ENCODE measurements at regions of chr10 and their contacts with region 1.

Region 1: DNA sequence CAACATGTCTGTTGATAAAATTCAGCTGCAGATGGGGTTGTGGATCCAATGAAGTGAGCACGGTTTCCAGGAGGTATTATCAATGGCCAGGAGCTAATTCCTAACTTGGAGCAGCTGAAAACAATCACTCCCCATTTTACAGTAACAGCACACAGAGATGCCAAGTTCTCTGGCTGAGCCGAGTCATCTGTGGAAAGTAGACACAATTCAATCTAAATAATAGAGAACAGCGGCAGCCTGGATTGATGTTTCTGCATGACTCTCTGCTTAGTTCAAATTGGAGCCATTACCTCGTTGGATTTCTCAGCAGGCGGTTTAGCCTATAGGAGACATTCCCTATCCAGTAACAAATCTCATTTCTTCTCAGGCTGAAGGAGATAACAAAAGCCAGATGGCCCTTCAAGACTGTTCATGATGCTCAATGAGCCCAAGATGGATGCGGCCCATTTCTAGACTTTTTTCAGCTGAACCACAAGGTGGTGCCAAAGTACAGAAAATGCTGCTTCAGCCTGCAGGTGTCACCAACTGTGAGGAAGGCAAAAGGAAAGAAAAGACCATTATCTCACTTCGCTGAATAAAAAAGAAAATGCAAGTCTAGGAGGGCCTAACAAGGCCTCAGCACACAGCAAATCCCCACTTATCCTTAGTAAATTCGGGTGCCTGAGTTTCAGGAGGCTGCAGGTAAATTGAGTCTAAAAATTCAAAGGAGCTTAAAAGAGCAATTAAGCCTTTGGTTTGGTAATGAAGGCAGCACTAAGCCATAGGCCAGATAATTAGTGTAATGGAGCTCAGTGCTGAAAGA is 83.7 kb downstream of the SLC16A9 start:
- DNase-seq: peak; percentile 30
- ATAC-seq: peak; percentile 94
- H3K4me3 Mint-ChIP-seq: no peak overlapping the region
- H3K27ac Mint-ChIP-seq: no peak overlapping the region
- H3K4me1 Mint-ChIP-seq: peaks cover 2% of the 10 kb centered on the region
- H3K27me3 Mint-ChIP-seq: no peaks in the 10 kb centered on the region
- CTCF ChIP-seq: peak; percentile 77

Region 2: GRCh38 chr10:58781873-58782488 is 843.9 kb before region 1 on chr10:
- CTCF ChIA-PET with region 1: interaction called, 15 read pairs
- POLR2A ChIA-PET with region 1: no interaction called
- intact Hi-C with region 1: no loop called
- DNase-seq: no peak
- ATAC-seq: no peak
- H3K4me3 Mint-ChIP-seq: no peak overlapping the region
- H3K27ac Mint-ChIP-seq: no peak overlapping the region
- H3K4me1 Mint-ChIP-seq: no peaks in the 10 kb centered on the region
- H3K27me3 Mint-ChIP-seq: peaks cover 4% of the 10 kb centered on the region
- CTCF ChIP-seq: peak; percentile 74

Region 3: GRCh38 chr10:59240582-59241183 is 385.2 kb before region 1 on chr10:
- CTCF ChIA-PET with region 1: interaction called, 3 read pairs
- POLR2A ChIA-PET with region 1: no interaction called
- intact Hi-C with region 1: loop called (anchors 5 kb)
- DNase-seq: no peak
- ATAC-seq: no peak
- H3K4me3 Mint-ChIP-seq: no peak overlapping the region
- H3K27ac Mint-ChIP-seq: no peak overlapping the region
- H3K4me1 Mint-ChIP-seq: no peaks in the 10 kb centered on the region
- H3K27me3 Mint-ChIP-seq: peaks cover 2% of the 10 kb centered on the region
- CTCF ChIP-seq: peak; percentile 67

Region 4: DNA sequence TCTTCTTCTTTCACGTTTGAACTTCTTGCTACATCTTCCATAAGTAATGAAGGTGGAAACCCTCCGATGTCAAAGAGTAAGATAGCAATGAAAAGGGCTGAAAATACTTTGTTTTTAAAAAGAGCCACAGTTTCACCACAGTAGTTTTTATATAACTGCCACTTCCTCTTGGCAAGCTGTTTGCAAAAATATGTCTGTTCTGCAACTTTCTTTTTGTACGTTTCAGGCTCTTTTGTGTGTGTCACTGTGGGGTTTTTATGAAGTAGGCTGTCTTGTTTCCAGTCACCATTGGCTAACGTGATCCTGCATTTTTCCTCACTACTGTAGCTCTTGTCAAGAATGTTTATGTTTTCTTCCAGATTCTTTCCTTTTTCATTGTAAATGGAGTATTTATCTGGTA is 28.1 kb after region 1 on chr10:
- CTCF ChIA-PET with region 1: no interaction called
- POLR2A ChIA-PET with region 1: no interaction called
- intact Hi-C with region 1: no loop called
- DNase-seq: no peak
- ATAC-seq: no peak
- H3K4me3 Mint-ChIP-seq: no peak overlapping the region
- H3K27ac Mint-ChIP-seq: peak overlapping the region; percentile 34
- H3K4me1 Mint-ChIP-seq: peaks cover 10% of the 10 kb centered on the region
- H3K27me3 Mint-ChIP-seq: no peaks in the 10 kb centered on the region
- CTCF ChIP-seq: no peak

Region 5: DNA sequence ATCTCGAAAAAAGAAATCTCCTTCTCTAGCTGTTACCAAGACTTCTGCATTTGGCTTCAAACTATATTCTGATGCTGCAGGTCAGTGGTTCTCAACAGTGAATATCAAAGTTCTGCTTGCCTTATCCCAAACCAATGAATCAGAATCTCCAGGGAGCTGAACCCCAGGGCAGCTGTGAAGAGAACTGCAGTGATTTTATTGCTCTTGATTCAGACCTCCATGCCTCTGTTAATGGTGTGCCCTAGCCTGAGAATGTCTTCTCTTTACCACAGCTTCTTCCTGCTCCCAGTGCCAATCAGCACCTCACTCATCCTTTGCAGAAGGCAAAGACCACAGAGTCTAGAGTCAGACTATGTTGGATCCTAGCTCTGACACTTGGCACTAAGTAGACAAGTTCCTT is 173.5 kb after region 1 on chr10:
- CTCF ChIA-PET with region 1: interaction called, 10 read pairs
- POLR2A ChIA-PET with region 1: no interaction called
- intact Hi-C with region 1: no loop called
- DNase-seq: no peak
- ATAC-seq: no peak
- H3K4me3 Mint-ChIP-seq: no peak overlapping the region
- H3K27ac Mint-ChIP-seq: no peak overlapping the region
- H3K4me1 Mint-ChIP-seq: peaks cover 2% of the 10 kb centered on the region
- H3K27me3 Mint-ChIP-seq: no peaks in the 10 kb centered on the region
- CTCF ChIP-seq: no peak

Region 6: GRCh38 chr10:59817773-59818172 is 191.9 kb after region 1 on chr10:
- CTCF ChIA-PET with region 1: interaction called, 15 read pairs
- POLR2A ChIA-PET with region 1: no interaction called
- intact Hi-C with region 1: no loop called
- DNase-seq: no peak
- ATAC-seq: no peak
- H3K4me3 Mint-ChIP-seq: no peak overlapping the region
- H3K27ac Mint-ChIP-seq: no peak overlapping the region
- H3K4me1 Mint-ChIP-seq: peaks cover 38% of the 10 kb centered on the region
- H3K27me3 Mint-ChIP-seq: no peaks in the 10 kb centered on the region
- CTCF ChIP-seq: no peak

Region 7: DNA sequence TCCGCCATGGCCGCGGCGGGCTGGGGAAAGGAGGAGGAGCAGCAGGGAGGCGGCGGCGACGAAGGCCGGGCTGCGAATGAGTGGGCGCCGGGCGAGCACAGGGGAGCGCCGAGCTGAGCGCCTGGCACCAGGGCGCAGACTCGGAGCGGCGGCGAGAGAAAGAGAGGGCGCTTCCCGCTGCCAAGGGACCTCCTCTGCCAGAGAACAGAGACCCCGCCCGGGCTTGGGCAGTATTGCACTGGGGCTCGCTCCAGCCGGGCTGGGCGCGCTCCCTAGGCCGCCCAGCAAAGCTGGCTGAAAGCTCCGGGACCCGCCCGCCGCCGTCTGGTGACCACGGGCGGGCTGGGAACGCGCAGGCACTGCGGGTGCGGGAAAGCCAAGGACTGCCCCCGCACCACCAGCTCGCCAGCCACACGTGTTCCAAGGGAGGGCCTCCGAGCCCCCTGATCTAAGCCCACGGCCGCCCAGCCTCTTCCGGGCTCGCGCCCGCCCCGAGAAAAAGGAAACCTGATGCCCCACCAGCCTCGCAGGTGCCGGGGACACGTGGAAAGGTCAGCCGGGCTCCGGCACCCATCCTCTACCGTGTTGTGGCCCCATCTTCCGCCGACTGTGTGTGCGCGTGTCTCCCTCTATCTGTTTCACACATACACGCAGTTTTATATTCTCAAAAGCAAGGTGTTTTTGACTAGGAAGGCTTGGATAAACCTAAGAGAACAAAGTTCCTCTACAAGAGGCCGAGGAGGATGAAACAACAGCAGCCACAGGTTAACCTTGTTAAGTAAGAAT is 280.7 kb after region 1 on chr10 and contains the start of gene CCDC6:
- CTCF ChIA-PET with region 1: interaction called, 6 read pairs
- POLR2A ChIA-PET with region 1: no interaction called
- intact Hi-C with region 1: loop called (anchors 5 kb)
- DNase-seq: peak; percentile 96
- ATAC-seq: peak; percentile 85
- H3K4me3 Mint-ChIP-seq: peak within 1 kb of the TSS; percentile 94
- H3K27ac Mint-ChIP-seq: peak within 1 kb of the TSS; percentile 98
- H3K4me1 Mint-ChIP-seq: peaks cover 55% of the 10 kb centered on the region
- H3K27me3 Mint-ChIP-seq: no peaks in the 10 kb centered on the region
- CTCF ChIP-seq: peak; percentile 73
- total RNA-seq, gene CCDC6: 34.8 to 35.8 TPM